ENCODE measurements at regions of chr1 and their contacts with region 1.

Region 1: GRCh38 chr1:167599957-167600581 is 30.0 kb upstream of the RCSD1 start:
- DNase-seq: peak; percentile 77
- ATAC-seq: peak; percentile 66
- H3K4me3 ChIP-seq: no peak overlapping the region
- H3K4me3 Mint-ChIP-seq: peak overlapping the region; percentile 66
- H3K27ac ChIP-seq: no peak overlapping the region
- H3K27ac Mint-ChIP-seq: peak overlapping the region; percentile 8
- H3K4me1 ChIP-seq: peaks cover 38 to 39% of the 10 kb centered on the region in 2 donors
- H3K4me1 Mint-ChIP-seq: peaks cover 41% of the 10 kb centered on the region
- H3K27me3 ChIP-seq: no peaks in the 10 kb centered on the region
- H3K27me3 Mint-ChIP-seq: no peaks in the 10 kb centered on the region
- CTCF ChIP-seq: peak; percentile 67

Region 2: GRCh38 chr1:167627865-167628641 is 28.0 kb after region 1 on chr1:
- CTCF ChIA-PET with region 1: interaction called, 378 read pairs
- POLR2A ChIA-PET with region 1: interaction called, 136 read pairs
- intact Hi-C with region 1: loop called (anchors 1 kb)
- DNase-seq: peak; percentile 82
- ATAC-seq: peak; percentile 64
- H3K4me3 ChIP-seq: peak overlapping the region in 3 of 5 experiments; percentile 1 to 98 (median 16)
- H3K4me3 Mint-ChIP-seq: peak overlapping the region; percentile 92
- H3K27ac ChIP-seq: peak overlapping the region; percentile 93 to 98
- H3K27ac Mint-ChIP-seq: peak overlapping the region; percentile 93
- H3K4me1 ChIP-seq: peaks cover 71 to 72% of the 10 kb centered on the region in 2 donors
- H3K4me1 Mint-ChIP-seq: peaks cover 66% of the 10 kb centered on the region
- H3K27me3 ChIP-seq: no peaks in the 10 kb centered on the region
- H3K27me3 Mint-ChIP-seq: no peaks in the 10 kb centered on the region
- CTCF ChIP-seq: no peak

Region 3: GRCh38 chr1:167656657-167657056 is 56.6 kb after region 1 on chr1:
- CTCF ChIA-PET with region 1: interaction called, 52 read pairs
- POLR2A ChIA-PET with region 1: interaction called, 12 read pairs
- intact Hi-C with region 1: no loop called
- DNase-seq: no peak
- ATAC-seq: no peak
- H3K4me3 ChIP-seq: no peak overlapping the region
- H3K4me3 Mint-ChIP-seq: peak overlapping the region; percentile 27
- H3K27ac ChIP-seq: peak overlapping the region in 1 of 2 donors; percentile 72
- H3K27ac Mint-ChIP-seq: peak overlapping the region; percentile 55
- H3K4me1 ChIP-seq: peaks cover 85 to 93% of the 10 kb centered on the region in 2 donors
- H3K4me1 Mint-ChIP-seq: peaks cover 92% of the 10 kb centered on the region
- H3K27me3 ChIP-seq: no peaks in the 10 kb centered on the region
- H3K27me3 Mint-ChIP-seq: no peaks in the 10 kb centered on the region
- CTCF ChIP-seq: no peak

Region 4: DNA sequence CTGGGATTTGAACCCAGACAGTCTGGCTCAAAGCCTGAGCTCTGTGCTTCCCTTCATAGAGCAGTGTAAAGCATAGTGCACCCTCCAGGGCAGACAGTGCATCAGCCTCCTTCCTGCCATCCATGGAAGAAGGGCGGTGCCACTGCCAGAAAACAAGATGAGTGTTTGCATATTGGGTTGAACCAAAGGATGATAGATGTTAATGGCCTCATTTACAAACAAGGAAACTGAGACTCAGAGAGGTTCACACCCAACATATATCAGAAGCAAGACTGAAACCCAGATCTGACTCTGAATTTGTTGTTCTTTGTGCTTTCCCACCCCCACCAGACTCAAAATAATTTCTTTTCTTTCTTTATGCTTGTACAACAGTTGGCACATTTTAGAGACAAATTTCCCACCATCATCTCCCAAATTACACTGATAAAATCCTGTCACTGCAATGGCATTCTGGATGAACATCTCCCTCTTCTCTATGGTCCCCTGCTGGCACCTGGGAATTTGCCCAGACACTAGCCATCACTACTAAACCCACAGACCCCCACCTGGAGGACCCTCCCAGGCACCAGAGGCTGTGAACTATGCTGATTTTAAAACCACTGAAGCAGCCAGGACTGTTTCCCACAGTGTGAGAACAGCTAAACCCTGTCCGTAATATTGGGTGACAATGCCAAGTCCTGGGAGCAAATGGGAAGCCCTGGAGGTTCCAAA is 76.3 kb after region 1 on chr1:
- CTCF ChIA-PET with region 1: interaction called, 77 read pairs
- POLR2A ChIA-PET with region 1: no interaction called
- intact Hi-C with region 1: no loop called
- DNase-seq: no peak
- ATAC-seq: no peak
- H3K4me3 ChIP-seq: no peak overlapping the region
- H3K4me3 Mint-ChIP-seq: peak overlapping the region; percentile 32
- H3K27ac ChIP-seq: peak overlapping the region; percentile 20 to 71
- H3K27ac Mint-ChIP-seq: peak overlapping the region; percentile 77
- H3K4me1 ChIP-seq: peaks cover 79 to 81% of the 10 kb centered on the region in 2 donors
- H3K4me1 Mint-ChIP-seq: peaks cover 33% of the 10 kb centered on the region
- H3K27me3 ChIP-seq: no peaks in the 10 kb centered on the region
- H3K27me3 Mint-ChIP-seq: no peaks in the 10 kb centered on the region
- CTCF ChIP-seq: no peak

Region 5: GRCh38 chr1:167708940-167709389 is 108.9 kb after region 1 on chr1:
- CTCF ChIA-PET with region 1: interaction called, 44 read pairs
- POLR2A ChIA-PET with region 1: interaction called, 11 read pairs
- intact Hi-C with region 1: no loop called
- DNase-seq: peak; percentile 75
- ATAC-seq: peak; percentile 65
- H3K4me3 ChIP-seq: peak overlapping the region in 1 of 5 experiments; percentile 6
- H3K4me3 Mint-ChIP-seq: peak overlapping the region; percentile 75
- H3K27ac ChIP-seq: peak overlapping the region; percentile 21 to 45
- H3K27ac Mint-ChIP-seq: peak overlapping the region; percentile 83
- H3K4me1 ChIP-seq: peaks cover 58 to 59% of the 10 kb centered on the region in 2 donors
- H3K4me1 Mint-ChIP-seq: peaks cover 66% of the 10 kb centered on the region
- H3K27me3 ChIP-seq: no peaks in the 10 kb centered on the region
- H3K27me3 Mint-ChIP-seq: no peaks in the 10 kb centered on the region
- CTCF ChIP-seq: no peak

Measured in B cell (primary cell).